K562 (cell line): ENCODE measurements at regions of chr7 and their contacts with region 1.

Region 1: DNA sequence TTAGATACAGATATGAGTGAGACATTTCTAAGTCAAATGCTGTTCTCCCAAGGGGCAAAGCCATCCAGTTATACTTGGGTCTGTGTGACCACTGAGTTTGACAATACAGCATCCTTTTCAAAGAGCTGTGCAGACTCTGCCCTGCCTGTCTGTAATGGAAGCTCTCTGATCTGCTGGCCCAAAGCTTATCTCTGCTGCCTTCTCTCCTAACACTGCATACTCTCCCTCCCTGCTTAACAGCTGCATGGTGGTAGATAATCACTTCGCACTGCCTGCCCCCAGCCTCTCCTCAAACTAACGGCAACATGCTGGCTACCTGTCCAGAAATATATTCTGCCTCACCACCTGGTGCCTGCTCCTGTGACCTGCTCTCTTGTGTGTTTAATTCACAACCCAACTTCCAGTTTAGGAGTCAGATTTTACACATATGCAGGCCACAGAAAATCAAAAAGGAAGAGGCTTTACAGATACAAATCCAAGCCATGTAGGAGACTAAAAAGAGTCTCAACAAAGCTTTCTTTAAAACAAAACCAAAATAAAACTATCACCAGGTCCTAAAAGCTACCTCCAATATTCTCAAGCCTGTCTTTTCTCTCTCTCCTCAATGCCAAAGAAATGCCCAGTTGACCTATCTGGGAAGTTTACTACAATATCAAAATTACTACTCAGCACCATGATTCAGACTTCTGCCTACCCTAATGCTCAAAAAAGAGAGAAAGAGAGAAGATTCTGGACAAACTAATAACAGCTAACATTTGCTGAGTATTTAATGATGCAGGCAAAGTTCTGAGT is 145.6 kb downstream of the RELN start:
- DNase-seq: peak; percentile 68 to 95 (median 84)
- ATAC-seq: peak; percentile 99
- H3K4me3 ChIP-seq: no peak overlapping the region
- H3K27ac ChIP-seq: peak overlapping the region; percentile 77
- H3K4me1 ChIP-seq: peaks cover 14 to 29% of the 10 kb centered on the region in 2 experiments; a peak in 4 of 5 replicates
- H3K27me3 ChIP-seq: no peaks in the 10 kb centered on the region
- CTCF ChIP-seq: no peak
- EP300 ChIP-seq: peak; percentile 96
- POLR2A ChIP-seq: no peak
- RAD21 ChIP-seq: peak in 1 of 2 experiments; percentile 43; a peak in 2 of 4 replicates

Region 2: GRCh38 chr7:103690242-103690974 is 153.5 kb before region 1 on chr7:
- CTCF ChIA-PET with region 1: no interaction called
- POLR2A ChIA-PET with region 1: no interaction called
- in situ Hi-C with region 1: no loop called
- intact Hi-C with region 1: no loop called
- DNase-seq: no peak
- ATAC-seq: peak; percentile 64; the same call in 2 of the 3 replicates
- H3K4me3 ChIP-seq: no peak overlapping the region
- H3K27ac ChIP-seq: no peak overlapping the region
- H3K4me1 ChIP-seq: no peaks in the 10 kb centered on the region
- H3K27me3 ChIP-seq: no peaks in the 10 kb centered on the region
- CTCF ChIP-seq: no peak
- EP300 ChIP-seq: no peak
- POLR2A ChIP-seq: no peak
- RAD21 ChIP-seq: no peak

Region 3: DNA sequence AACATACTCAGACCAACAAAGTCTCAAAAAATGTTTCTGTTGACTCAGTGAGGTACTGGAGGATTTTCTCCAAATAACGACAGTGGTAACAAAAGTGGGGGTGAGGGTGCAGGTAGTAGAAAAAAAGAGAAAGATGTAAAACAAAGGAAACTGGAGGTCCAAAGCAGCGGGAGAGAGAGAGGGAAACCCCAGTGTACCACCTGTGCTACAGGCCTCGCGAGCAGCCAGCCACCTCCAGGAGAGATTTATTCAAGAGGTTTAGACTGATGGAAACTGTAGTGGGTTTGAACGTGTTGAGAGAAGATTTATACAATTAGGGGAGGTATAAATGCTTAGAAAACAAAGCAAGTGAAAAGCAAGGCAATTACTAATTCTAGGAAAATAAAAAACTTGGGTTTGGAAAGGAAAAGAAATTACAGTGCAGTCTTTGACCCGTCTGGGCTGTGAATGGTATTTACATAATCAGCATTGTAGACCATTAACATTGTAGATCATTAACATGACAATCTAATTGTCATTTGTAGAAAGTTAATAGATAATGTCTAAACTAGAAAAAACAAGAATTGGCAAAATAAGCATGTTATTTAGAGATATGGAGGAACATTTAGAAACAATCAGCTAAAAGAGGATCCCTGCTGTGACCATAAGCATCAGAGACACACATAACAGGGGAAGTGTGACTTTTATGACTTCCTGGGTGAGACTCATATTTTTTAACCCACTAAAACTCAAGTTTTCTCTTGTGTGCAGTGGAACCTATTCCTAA is 34.5 kb before region 1 on chr7:
- CTCF ChIA-PET with region 1: no interaction called
- POLR2A ChIA-PET with region 1: no interaction called
- in situ Hi-C with region 1: no loop called
- intact Hi-C with region 1: loop called (anchors 5 kb)
- DNase-seq: peak in 2 of 4 experiments; percentile 44 to 50
- ATAC-seq: peak; percentile 63
- H3K4me3 ChIP-seq: no peak overlapping the region
- H3K27ac ChIP-seq: peak overlapping the region; percentile 61; the same call in 2 of the 3 replicates
- H3K4me1 ChIP-seq: peaks cover 16 to 22% of the 10 kb centered on the region in 2 experiments; a peak in 4 of 5 replicates
- H3K27me3 ChIP-seq: no peaks in the 10 kb centered on the region
- CTCF ChIP-seq: no peak
- EP300 ChIP-seq: no peak; the same call in 1 of the 2 replicates
- POLR2A ChIP-seq: no peak
- RAD21 ChIP-seq: no peak

Region 4: GRCh38 chr7:103915680-103916357 is 71.9 kb after region 1 on chr7:
- CTCF ChIA-PET with region 1: no interaction called
- POLR2A ChIA-PET with region 1: no interaction called
- in situ Hi-C with region 1: no loop called
- intact Hi-C with region 1: loop called (anchors 2 kb)
- DNase-seq: peak; percentile 59 to 90 (median 70)
- ATAC-seq: peak; percentile 86
- H3K4me3 ChIP-seq: no peak overlapping the region
- H3K27ac ChIP-seq: peak overlapping the region; percentile 61; the same call in 2 of the 3 replicates
- H3K4me1 ChIP-seq: peaks cover 15 to 44% of the 10 kb centered on the region in 2 experiments
- H3K27me3 ChIP-seq: no peaks in the 10 kb centered on the region
- CTCF ChIP-seq: no peak
- EP300 ChIP-seq: peak; percentile 79
- POLR2A ChIP-seq: no peak
- RAD21 ChIP-seq: no peak

Region 5: GRCh38 chr7:103996639-103997038 is 152.8 kb after region 1 on chr7:
- CTCF ChIA-PET with region 1: no interaction called
- POLR2A ChIA-PET with region 1: no interaction called
- in situ Hi-C with region 1: no loop called
- intact Hi-C with region 1: loop called (anchors 5 kb)
- DNase-seq: peak in 1 of 4 experiments; percentile 24
- ATAC-seq: no peak
- H3K4me3 ChIP-seq: no peak overlapping the region
- H3K27ac ChIP-seq: peak overlapping the region; percentile 51
- H3K4me1 ChIP-seq: peaks cover 5 to 44% of the 10 kb centered on the region in 2 experiments
- H3K27me3 ChIP-seq: no peaks in the 10 kb centered on the region
- CTCF ChIP-seq: no peak
- EP300 ChIP-seq: no peak
- POLR2A ChIP-seq: no peak
- RAD21 ChIP-seq: no peak